Activated T-helper 1 cell treated with anti-CD3 and anti-CD28 coated beads, Interleukin-12 subunit alpha, Interleukin-12 subunit beta, Interleukin-2, Interleukin-4 antibody, amounts not matched to agents 30 ng/mL and 10 ng/mL and 1 ng/mL, durations not matched to agents 14 hours and 24 hours and 36 hours (primary cell): ENCODE measurements at regions of chr10 and their contacts with region 1.

Region 1: DNA sequence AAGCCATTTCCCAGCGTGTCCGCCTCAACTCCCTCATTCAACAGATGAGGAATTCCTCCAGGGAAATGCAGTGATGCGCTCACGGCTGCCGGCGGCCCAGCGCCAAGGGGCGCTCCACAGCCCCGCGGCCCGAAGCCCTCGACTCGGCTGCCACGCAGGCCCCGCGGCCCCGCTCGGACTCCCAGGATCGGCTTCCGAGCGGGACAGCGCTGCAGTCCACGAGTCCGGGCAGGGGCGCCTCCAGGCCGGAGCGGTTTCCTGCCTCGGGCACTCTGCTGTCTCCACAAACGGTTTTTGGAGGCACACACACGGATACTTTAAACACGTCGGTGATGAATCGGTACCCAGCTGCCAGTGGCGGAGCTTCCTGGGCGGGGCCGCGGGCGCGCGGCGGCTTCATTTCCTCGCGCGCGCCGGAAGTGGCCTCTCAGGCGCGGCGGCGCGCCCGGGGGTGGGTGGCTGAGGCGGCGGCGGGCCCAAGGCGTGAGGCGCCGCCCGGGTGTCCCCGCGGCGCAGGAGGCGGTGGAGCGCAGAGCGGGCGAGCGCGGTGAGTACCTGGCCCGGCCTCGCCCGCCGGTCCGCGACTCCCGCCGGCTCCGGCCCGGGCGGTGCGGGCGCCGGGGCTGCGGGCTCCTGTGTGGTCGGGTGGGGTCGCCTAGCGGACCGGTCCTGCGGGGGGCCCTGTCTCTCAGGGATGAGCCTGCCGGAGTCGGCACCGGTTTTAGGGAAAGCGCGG is at the start of gene CSGALNACT2:
- DNase-seq: peak; percentile 90
- H3K4me3 Mint-ChIP-seq: peak within 1 kb of the TSS; percentile 98
- H3K27ac Mint-ChIP-seq: peak within 1 kb of the TSS; percentile 98
- H3K4me1 Mint-ChIP-seq: peaks cover 71% of the 10 kb centered on the region
- H3K27me3 Mint-ChIP-seq: peaks cover 2% of the 10 kb centered on the region
- total RNA-seq, gene CSGALNACT2: 30.3 and 32.0 TPM in 2 replicates

Region 2: GRCh38 chr10:42552493-42553407 is 585.4 kb before region 1 on chr10:
- intact Hi-C with region 1: loop called (anchors 5 kb)
- DNase-seq: peak; percentile 94
- H3K4me3 Mint-ChIP-seq: peak overlapping the region; percentile 99
- H3K27ac Mint-ChIP-seq: peak overlapping the region; percentile 98
- H3K4me1 Mint-ChIP-seq: peaks cover 38% of the 10 kb centered on the region
- H3K27me3 Mint-ChIP-seq: no peaks in the 10 kb centered on the region

Region 3: DNA sequence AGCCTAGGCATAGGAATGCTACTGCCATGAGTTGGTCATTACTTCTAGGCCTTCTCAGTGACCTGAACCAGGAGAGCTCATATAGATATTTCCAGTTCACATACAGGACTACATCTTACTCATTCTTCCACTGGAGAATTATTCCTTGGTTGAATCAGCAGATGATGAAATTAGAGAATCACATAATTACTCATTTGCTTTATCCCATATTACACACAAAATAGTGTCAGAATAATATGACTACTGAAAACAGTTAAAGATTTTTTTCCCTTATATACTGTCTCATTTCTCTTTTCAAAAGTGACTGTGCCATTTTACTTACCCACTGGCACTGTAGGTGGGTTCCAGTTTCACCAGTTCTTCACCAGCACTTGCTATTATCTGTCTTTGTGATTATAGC is 337.1 kb before region 1 on chr10:
- intact Hi-C with region 1: loop called (anchors 1 kb)
- DNase-seq: no peak
- H3K4me3 Mint-ChIP-seq: no peak overlapping the region
- H3K27ac Mint-ChIP-seq: peak overlapping the region; percentile 58
- H3K4me1 Mint-ChIP-seq: peaks cover 12% of the 10 kb centered on the region
- H3K27me3 Mint-ChIP-seq: no peaks in the 10 kb centered on the region

Region 4: DNA sequence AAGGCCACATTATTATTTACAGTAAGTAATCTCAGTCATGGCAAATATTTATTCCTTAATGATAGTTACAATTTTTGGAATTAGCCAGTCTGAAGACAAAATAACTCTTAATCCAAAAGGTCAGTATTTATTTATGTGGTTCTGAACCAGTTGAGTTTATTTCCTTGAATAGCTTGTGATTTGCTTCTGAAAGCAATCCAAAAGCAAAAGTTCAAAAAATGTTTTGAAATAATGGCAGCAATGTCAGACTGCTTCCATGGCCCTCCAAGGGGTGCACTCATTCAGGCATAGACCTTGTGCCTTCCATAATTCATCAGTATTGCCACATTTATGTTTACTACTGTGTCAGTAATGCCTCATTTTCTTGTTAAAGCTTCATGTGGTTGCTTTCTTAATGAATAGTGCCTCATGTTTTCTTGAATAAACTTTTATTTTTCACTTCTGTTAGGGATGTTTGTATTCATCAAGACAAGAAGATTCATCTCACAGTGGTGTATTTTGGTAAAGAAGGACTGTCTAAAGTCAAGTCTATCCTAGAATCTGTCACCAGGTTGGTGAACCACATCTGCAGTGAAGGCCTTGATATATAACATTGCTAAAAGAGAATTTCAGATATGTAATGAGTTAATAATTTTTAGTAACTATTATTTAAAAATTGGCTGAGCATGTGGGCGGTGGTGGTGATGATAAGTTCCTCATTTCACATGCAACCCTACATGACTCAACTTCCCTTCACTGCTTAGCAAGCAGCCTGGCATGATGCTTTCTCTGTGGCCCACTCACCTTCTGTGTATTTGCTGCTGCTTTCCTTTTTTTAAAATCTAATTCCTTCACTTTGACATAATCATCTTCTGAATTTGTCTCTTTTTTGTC is 22.1 kb after region 1 on chr10:
- intact Hi-C with region 1: loop called (anchors 1 kb)
- DNase-seq: no peak
- H3K4me3 Mint-ChIP-seq: no peak overlapping the region
- H3K27ac Mint-ChIP-seq: peak overlapping the region; percentile 81
- H3K4me1 Mint-ChIP-seq: peaks cover 63% of the 10 kb centered on the region
- H3K27me3 Mint-ChIP-seq: no peaks in the 10 kb centered on the region

Region 5: DNA sequence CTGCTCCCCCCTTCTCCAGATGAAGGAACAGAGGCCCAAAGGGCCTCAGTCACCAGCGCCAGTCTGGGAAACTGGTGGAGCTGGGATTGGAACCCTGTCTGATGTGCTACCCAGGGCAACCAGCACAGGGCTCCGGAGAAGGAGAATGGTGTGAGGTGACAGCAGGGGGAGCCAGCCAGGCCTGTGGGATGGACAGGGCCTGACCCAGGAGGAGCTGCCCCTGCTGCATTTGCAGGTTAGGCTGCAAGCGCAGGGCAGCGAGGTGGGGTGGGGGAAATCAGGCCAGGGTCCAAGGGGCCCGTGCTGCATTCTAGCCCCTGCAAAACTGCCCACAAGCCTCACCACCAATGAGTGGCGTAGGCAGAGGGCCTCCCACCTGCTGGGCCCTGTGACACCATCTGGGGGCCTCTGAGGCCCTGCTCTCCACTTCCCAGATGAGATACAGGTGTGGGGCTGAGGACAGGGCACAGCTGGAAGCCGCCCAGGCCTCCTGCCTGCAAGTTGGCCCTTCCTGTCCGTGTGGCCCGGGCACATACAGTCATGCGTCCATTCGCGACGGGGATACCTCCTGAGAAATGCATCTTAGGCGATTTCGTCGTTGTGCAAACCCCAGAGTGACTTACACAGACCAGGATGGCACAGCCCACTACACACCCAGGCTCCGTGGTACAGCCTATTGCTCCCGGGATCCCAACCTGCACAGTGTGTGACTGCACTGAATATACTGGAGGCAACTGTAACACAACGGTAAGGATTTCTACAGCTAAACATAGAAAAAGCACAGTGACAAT is 83.4 kb after region 1 on chr10:
- intact Hi-C with region 1: no loop called
- DNase-seq: no peak
- H3K4me3 Mint-ChIP-seq: no peak overlapping the region
- H3K27ac Mint-ChIP-seq: no peak overlapping the region
- H3K4me1 Mint-ChIP-seq: no peaks in the 10 kb centered on the region
- H3K27me3 Mint-ChIP-seq: peaks cover 23% of the 10 kb centered on the region

Region 6: DNA sequence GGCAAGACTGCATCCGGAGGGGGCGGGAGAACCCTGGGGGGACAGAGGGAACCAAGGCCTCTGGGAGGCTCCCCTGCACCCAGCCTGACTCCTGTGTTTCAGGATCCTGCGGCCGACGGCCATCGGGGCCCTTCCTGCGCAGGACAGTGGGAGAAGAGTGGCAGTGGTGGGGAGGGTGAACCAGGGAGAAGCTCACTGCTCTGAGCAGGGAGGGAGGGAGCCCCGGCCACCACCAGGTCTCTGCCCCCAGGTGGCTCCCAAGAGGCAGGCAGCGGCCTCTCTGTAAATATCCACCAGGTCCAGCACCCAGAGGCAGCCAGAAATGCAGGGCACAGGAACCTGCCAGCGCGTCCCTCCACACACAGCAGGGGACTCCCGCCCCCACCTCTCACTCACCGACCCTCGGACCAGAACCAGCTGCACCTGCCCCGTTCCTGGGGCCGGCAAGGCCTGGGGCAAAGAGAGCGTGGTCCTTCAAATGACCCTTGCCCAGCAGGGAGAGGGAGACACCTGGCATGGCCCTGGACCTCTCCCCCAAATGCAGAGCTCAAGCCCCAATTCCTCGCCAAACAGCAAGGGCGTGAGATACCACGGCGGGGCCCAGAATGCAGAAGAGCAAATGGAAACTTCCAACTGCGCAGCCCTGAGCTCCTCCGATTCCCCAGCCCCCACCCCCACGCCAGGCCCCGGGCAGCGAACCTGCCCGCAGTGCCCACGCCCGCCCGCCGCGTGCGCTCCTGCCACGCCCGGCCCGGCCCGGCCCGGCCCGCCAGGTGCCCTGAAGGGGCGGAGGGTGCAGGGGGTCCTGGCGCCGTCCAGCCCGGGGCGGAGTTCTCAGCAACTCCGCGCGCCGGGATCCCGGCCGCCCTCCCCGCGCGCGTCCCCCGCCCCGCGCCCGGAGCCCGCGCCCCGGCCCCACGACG is 127.9 kb after region 1 on chr10:
- intact Hi-C with region 1: no loop called
- DNase-seq: no peak
- H3K4me3 Mint-ChIP-seq: peak overlapping the region; percentile 80
- H3K27ac Mint-ChIP-seq: no peak overlapping the region
- H3K4me1 Mint-ChIP-seq: no peaks in the 10 kb centered on the region
- H3K27me3 Mint-ChIP-seq: peaks cover 54% of the 10 kb centered on the region

Region 7: GRCh38 chr10:43322769-43323168 is 184.6 kb after region 1 on chr10:
- intact Hi-C with region 1: no loop called
- DNase-seq: peak; percentile 85
- H3K4me3 Mint-ChIP-seq: no peak overlapping the region
- H3K27ac Mint-ChIP-seq: no peak overlapping the region
- H3K4me1 Mint-ChIP-seq: peaks cover 39% of the 10 kb centered on the region
- H3K27me3 Mint-ChIP-seq: peaks cover 15% of the 10 kb centered on the region

Region 8: GRCh38 chr10:43361986-43362839 is 224.0 kb after region 1 on chr10:
- intact Hi-C with region 1: loop called (anchors 5 kb)
- DNase-seq: peak; percentile 98
- H3K4me3 Mint-ChIP-seq: peak overlapping the region; percentile 98
- H3K27ac Mint-ChIP-seq: peak overlapping the region; percentile 99
- H3K4me1 Mint-ChIP-seq: peaks cover 25% of the 10 kb centered on the region
- H3K27me3 Mint-ChIP-seq: peaks cover 1% of the 10 kb centered on the region

Region 9: DNA sequence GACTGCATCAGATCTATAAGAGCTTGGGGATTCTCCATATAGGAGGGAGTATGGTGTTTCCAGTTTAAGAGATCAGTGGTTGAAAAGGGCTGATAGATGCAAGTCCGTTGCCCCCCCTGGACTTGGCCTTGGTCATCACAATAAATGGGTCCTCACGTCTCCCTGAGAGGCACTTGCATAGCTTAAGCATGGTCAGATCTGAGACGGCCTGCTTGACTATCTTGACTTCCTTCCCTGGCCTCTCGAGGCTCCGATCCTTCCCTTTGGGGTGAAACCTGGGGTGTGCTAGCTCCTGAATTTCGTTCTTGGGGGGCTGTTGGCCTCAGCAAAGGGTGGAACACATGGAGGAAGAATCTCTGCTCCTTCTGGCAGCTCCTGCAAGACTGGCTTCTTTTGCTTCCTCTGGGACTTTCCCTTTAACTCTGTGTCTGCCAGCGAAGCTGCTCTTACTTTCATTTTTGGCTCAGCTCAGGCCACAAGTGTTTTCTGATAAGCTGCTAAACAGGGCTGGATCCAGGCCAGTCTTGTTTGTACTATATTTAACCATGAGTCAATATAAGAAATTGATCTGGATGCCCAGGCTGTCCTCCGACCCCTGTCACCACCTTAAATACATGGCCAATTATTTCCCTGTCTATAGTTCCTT is 456.9 kb after region 1 on chr10:
- intact Hi-C with region 1: loop called (anchors 10 kb)
- DNase-seq: peak; percentile 29
- H3K4me3 Mint-ChIP-seq: peak overlapping the region; percentile 51
- H3K27ac Mint-ChIP-seq: no peak overlapping the region
- H3K4me1 Mint-ChIP-seq: peaks cover 22% of the 10 kb centered on the region
- H3K27me3 Mint-ChIP-seq: peaks cover 16% of the 10 kb centered on the region